IMR-90 (cell line): ENCODE measurements at regions of chr15 and their contacts with region 1.

Region 1: GRCh38 chr15:76711351-76711827 is 193.8 kb downstream of the SCAPER start:
- DNase-seq: no peak
- ATAC-seq: no peak
- H3K4me3 ChIP-seq: no peak overlapping the region
- H3K27ac ChIP-seq: no peak overlapping the region
- H3K4me1 ChIP-seq: no peaks in the 10 kb centered on the region
- H3K27me3 ChIP-seq: no peaks in the 10 kb centered on the region
- CTCF ChIP-seq: no peak
- POLR2A ChIP-seq: no peak
- RAD21 ChIP-seq: no peak

Region 2: DNA sequence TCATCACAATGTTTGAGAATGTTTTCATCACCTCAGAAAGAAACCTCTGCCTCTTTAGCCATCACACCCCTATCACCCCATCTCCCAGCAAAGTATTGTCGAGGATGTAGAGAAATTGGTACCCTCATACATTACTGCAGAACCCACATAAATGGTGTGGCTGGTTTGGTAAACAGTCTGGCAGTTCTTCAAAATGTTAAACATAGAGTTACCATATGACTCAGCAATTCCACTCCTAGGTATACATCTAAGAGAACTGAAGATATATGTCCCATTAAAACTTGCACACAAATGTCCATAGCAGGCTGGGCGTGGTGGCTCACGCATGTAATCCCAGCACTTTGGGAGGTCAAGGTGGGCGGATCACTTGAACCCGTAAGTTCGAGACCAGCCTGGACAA is 391.4 kb before region 1 on chr15:
- CTCF ChIA-PET with region 1: interaction called, 11 read pairs
- POLR2A ChIA-PET with region 1: no interaction called
- dilution Hi-C with region 1: no loop called
- in situ Hi-C with region 1: no loop called
- intact Hi-C with region 1: no loop called
- DNase-seq: no peak
- ATAC-seq: no peak
- H3K4me3 ChIP-seq: no peak overlapping the region
- H3K27ac ChIP-seq: no peak overlapping the region
- H3K4me1 ChIP-seq: no peaks in the 10 kb centered on the region; the same call in 1 of the 2 replicates
- H3K27me3 ChIP-seq: peaks cover 15% of the 10 kb centered on the region
- CTCF ChIP-seq: no peak
- POLR2A ChIP-seq: no peak
- RAD21 ChIP-seq: no peak

Region 3: DNA sequence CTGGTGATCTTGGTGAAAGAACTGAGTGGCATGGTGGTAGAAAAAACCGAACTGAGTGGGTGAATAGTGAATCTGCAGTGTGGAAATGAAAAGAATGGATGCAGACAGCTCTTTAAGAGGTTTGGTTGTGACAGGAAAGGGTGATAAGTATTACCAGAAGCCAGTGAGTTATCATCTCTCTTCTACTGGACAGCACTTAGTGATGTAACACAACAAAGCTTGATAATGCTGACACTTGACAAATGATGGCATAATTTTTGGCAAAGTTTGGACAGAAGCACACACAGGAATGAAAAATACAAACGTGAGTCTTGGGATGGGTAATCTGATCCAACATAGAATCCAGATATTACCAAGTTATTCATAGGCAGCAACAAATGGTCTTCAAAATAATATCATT is 262.6 kb before region 1 on chr15:
- CTCF ChIA-PET with region 1: no interaction called
- POLR2A ChIA-PET with region 1: no interaction called
- dilution Hi-C with region 1: no loop called
- in situ Hi-C with region 1: no loop called
- intact Hi-C with region 1: no loop called
- DNase-seq: no peak
- ATAC-seq: no peak
- H3K4me3 ChIP-seq: no peak overlapping the region
- H3K27ac ChIP-seq: no peak overlapping the region
- H3K4me1 ChIP-seq: no peaks in the 10 kb centered on the region
- H3K27me3 ChIP-seq: no peaks in the 10 kb centered on the region
- CTCF ChIP-seq: no peak
- POLR2A ChIP-seq: no peak
- RAD21 ChIP-seq: no peak